ENCODE measurements at regions of chr5 and their contacts with region 1.

Region 1: GRCh38 chr5:78483809-78484521 is 123.5 kb downstream of the SCAMP1 start:
- DNase-seq: no peak
- H3K4me3 ChIP-seq: no peak overlapping the region
- H3K27me3 ChIP-seq: no peaks in the 10 kb centered on the region
- CTCF ChIP-seq: no peak

Region 2: DNA sequence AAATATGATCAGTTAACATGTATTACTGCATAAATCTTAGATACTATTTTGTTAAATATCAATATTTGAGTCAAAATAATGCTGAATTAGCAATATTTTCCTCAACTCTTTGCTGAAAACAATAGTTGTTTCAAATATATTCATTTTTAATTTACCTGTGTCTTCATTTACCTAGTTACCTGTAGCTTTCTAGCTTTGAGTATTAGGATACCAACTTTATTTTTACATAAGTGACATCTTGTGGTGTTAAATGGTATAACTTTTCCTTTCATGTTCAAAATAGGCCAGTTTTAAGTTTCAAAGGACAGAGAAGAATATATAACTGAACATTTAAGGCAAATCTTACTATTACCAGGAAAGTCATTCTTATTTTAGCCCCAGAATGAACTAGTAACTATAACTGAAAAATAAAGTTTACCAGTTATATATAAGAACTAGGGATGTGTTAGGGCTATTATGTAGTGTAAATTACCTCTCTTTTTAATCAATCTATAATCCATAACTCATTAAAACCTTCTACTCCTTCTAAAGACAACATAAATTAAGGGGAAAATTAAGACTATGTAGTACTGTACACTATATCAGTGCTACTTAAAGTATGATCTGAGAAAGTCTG is 214.8 kb before region 1 on chr5:
- CTCF ChIA-PET with region 1: no interaction called
- POLR2A ChIA-PET with region 1: no interaction called
- DNase-seq: no peak
- H3K4me3 ChIP-seq: no peak overlapping the region
- H3K27me3 ChIP-seq: no peaks in the 10 kb centered on the region
- CTCF ChIP-seq: peak; percentile 42

Region 3: GRCh38 chr5:78497573-78498533 is 13.9 kb after region 1 on chr5:
- CTCF ChIA-PET with region 1: interaction called, 13 read pairs
- POLR2A ChIA-PET with region 1: no interaction called
- DNase-seq: no peak
- H3K4me3 ChIP-seq: no peak overlapping the region
- H3K27me3 ChIP-seq: no peaks in the 10 kb centered on the region
- CTCF ChIP-seq: no peak

Measured in BJ (cell line).